GM10248 (cell line): ENCODE measurements at regions of chr10 and their contacts with region 1.

Region 1: GRCh38 chr10:114876602-114877300 is 55.2 kb downstream of the FHIP2A start:
- DNase-seq: peak; percentile 76
- CTCF ChIP-seq: peak; percentile 87

Region 2: DNA sequence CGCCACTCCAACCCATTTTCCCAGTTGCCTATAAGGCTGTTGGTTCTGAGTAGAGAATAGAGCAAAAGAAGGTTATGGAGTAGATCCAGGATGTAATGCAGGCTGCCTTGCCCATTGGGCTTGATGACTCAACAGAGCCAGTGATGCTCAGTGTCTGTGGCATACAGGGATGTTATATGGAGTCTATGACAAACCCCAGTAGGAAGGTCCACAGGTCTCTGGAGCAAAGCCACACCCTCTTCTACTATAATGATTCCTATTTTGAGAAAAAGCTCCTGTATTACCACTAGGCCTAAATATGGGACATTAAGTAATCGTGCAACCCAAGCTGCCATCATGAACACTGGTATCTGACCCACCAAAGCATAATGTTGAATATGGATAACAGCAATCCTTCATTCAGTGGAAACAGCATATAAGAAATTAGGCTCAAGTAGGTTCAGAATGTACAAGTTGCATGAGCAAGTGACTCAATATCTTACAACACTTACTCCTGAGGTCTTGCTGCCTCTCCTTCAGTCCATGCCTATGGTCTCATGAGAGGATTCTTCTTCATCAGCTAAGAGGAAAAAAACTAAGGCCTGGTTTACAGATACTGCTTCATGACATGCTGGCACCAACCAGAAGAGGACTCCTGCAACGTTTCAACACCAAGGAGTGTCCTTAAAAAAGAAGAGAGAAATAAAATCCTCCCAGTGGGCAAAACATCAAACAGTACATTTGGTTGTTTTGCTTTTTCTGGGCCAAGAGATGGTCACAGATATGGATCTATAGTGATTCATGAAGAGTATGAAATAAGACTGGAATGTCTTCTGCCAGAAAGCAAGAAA is 70.0 kb before region 1 on chr10:
- CTCF ChIA-PET with region 1: no interaction called
- POLR2A ChIA-PET with region 1: no interaction called
- DNase-seq: no peak
- CTCF ChIP-seq: no peak

Region 3: DNA sequence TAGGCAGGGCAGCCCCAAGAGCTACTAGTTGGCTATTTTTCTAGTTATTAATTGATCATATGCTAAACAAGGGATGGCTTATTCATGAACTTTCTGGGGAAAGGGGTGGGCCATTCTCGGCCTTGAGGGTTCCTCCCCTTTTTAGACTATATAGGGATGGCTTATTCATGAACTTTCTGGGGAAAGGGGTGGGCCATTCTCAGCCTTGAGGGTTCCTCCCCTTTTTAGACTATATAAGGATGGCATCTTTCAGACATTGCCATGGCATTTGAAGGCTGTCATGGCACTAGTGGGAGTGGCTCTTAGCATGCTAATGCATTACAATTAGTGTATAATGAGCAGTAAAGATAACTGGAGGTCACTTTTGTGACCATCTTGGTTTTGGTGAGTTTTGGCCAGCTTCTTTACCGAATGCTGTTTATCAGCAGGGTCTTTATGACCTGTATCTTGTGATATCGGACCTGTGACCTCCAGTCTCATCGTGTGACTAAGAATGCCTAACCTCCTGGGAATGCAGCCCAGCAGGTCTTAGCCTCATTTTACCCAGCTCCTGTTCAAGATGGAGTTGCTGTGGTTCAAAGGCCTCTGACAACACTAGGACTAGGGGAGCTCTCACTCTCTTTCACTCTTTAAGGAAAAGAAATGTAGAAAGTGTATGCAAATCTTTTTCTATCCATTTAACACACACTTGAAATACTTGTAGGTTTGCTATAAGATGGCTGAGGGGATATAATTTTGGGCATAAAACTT is 47.4 kb before region 1 on chr10:
- CTCF ChIA-PET with region 1: interaction called, 10 read pairs
- POLR2A ChIA-PET with region 1: no interaction called
- DNase-seq: no peak
- CTCF ChIP-seq: no peak

Region 4: DNA sequence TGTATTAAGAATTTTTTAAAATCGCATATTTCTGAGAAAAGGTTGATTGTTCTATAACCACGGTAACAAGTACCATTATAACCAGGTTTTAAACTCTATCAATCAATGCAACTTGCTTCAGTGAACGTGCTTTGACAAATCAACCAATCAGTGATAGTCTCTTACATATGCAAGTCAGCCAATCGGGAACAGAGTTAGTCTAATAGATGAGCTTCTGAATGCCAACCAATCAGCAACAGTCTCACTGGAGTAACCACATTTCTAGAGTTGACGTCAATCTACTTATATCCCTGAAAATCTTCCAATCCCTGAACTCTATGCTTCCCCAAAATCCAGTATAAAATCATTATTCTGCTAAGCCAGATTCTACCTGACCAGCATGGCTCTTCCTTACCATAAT is 16.5 kb after region 1 on chr10:
- CTCF ChIA-PET with region 1: interaction called, 29 read pairs
- POLR2A ChIA-PET with region 1: no interaction called
- DNase-seq: no peak
- CTCF ChIP-seq: no peak

Region 5: GRCh38 chr10:114911052-114911711 is 34.4 kb after region 1 on chr10:
- CTCF ChIA-PET with region 1: interaction called, 15 read pairs
- POLR2A ChIA-PET with region 1: no interaction called
- DNase-seq: peak; percentile 9
- CTCF ChIP-seq: no peak

Region 6: DNA sequence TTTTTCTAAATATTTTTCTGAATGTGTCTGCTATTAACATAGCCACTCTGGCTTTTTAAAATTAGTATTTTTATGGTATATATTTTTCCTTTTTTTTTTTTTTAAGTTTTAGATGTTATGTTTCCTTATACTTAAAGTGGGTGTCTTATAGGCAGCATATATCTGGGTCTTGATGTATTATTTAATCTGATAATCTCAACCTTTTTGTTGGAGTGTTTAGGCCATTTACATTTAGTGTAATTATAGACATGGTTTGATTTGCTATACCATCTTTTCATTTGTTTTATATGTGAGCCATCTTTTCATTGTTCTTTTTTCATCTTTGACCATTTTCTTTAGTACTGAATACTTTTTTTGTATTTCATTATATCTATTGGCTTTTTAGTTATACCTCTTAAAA is 106.2 kb after region 1 on chr10:
- CTCF ChIA-PET with region 1: no interaction called
- POLR2A ChIA-PET with region 1: no interaction called
- DNase-seq: no peak
- CTCF ChIP-seq: no peak

Region 7: GRCh38 chr10:115136616-115137015 is 259.9 kb after region 1 on chr10:
- CTCF ChIA-PET with region 1: interaction called, 10 read pairs
- POLR2A ChIA-PET with region 1: no interaction called
- DNase-seq: no peak
- CTCF ChIP-seq: no peak

Region 8: DNA sequence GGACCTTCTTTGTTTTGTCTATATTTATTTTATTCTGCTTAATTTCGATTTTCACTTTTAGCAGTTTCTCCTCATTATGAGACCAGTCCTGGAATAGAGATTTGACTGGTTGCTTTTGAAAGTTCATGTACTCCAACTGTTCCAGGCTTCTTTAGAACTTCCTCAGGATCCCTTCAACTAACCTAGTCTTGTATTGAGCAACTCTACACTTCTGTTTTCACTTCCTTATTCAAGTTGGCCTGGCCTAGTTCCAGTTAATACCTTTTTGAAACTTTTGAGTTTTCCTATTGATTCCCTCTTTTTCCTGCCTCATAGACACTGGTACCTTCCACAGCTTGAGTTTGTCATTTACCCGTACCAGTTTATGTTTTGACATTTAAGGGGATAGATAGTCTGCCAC is 638.1 kb after region 1 on chr10:
- CTCF ChIA-PET with region 1: no interaction called
- POLR2A ChIA-PET with region 1: no interaction called
- DNase-seq: no peak
- CTCF ChIP-seq: no peak